Activated CD4-positive, alpha-beta memory T cell treated with anti-CD3 and anti-CD28 coated beads for 36 hours (primary cell): ENCODE measurements at regions of chr11 and their contacts with region 1.

Region 1: GRCh38 chr11:16801288-16801980 is 63.0 kb downstream of the C11orf58 start:
- DNase-seq: no peak
- H3K4me3 Mint-ChIP-seq: no peak overlapping the region
- H3K27ac Mint-ChIP-seq: no peak overlapping the region
- H3K4me1 Mint-ChIP-seq: peaks cover 10% of the 10 kb centered on the region
- H3K27me3 Mint-ChIP-seq: no peaks in the 10 kb centered on the region

Region 2: GRCh38 chr11:16169541-16169940 is 631.9 kb before region 1 on chr11:
- CTCF ChIA-PET with region 1: no interaction called
- POLR2A ChIA-PET with region 1: no interaction called
- intact Hi-C with region 1: no loop called
- DNase-seq: no peak
- H3K4me3 Mint-ChIP-seq: no peak overlapping the region
- H3K27ac Mint-ChIP-seq: no peak overlapping the region
- H3K4me1 Mint-ChIP-seq: no peaks in the 10 kb centered on the region
- H3K27me3 Mint-ChIP-seq: no peaks in the 10 kb centered on the region

Region 3: GRCh38 chr11:16460508-16460907 is 340.9 kb before region 1 on chr11:
- CTCF ChIA-PET with region 1: no interaction called
- POLR2A ChIA-PET with region 1: no interaction called
- intact Hi-C with region 1: no loop called
- DNase-seq: no peak
- H3K4me3 Mint-ChIP-seq: no peak overlapping the region
- H3K27ac Mint-ChIP-seq: no peak overlapping the region
- H3K4me1 Mint-ChIP-seq: no peaks in the 10 kb centered on the region
- H3K27me3 Mint-ChIP-seq: no peaks in the 10 kb centered on the region

Region 4: DNA sequence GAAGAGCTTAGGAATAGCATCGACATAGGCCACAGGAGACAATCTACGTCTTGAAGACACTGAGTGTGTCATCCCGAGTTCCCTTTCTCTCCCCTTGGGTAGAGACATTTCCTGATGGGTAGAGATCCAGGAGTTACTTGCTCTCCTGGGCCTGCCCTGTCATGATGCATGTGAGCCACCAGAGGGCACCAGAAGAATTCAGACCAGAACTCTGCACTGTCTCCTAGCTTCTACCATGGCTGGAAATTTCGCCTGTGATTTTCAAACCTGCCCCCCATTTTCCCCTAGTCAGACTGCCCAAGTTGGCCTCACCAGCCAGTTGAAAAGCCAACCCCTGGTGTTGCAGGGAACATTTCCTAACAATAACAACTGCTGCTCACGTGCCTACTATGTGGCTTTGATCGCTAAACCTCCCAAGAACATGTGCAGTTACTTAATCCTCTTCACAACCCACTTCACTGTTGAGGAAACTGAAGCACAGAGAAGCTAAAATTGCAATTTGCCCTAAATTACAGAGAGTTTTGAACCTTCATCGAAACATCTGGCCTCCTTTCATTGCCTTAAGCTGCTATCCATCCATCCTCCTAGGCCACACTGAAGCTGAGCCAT is 15.8 kb before region 1 on chr11:
- CTCF ChIA-PET with region 1: interaction called, 26 read pairs
- POLR2A ChIA-PET with region 1: no interaction called
- intact Hi-C with region 1: no loop called
- DNase-seq: peak; percentile 72
- H3K4me3 Mint-ChIP-seq: no peak overlapping the region
- H3K27ac Mint-ChIP-seq: no peak overlapping the region
- H3K4me1 Mint-ChIP-seq: no peaks in the 10 kb centered on the region
- H3K27me3 Mint-ChIP-seq: no peaks in the 10 kb centered on the region